ENCODE measurements at regions of chr2 and their contacts with region 1.

Region 1: DNA sequence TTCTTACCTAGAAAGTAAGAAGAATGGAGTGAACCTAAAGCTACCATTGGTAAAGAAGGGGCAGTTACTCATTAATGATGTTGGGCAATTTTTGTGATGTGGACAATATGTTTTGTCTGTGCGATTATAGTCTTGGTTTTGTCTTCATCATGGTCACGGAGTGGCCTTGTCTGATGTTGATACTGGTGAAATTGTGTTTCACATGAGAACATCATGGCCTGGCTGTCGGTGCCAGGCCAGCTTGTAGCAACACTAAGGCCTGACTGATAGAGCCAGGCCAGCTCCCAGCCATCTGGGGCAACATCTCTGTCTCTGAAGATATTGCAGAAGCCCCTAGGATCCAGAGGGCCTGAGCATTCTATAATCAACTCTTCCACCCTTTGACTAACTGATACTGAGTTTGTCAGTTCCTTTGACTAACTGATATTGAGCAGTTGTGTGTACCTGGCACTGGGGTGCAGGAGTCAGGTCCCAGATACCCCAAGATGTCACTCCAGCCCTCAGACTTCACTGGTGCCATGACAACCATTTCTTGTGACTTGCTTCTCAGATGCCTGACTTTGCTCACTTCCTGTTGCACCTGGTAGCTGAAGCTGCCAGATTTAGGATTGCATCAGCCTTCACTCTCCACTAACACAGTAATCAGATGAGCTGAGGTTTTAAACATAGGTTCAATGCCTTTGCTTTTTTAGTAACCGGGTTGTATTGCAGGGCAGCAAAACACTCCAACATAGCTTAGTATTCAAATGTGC is 62.5 kb downstream of the RPIA start:
- DNase-seq: peak; percentile 98
- H3K4me3 ChIP-seq: peak overlapping the region; percentile 37
- H3K27ac ChIP-seq: peak overlapping the region; percentile 96
- H3K4me1 ChIP-seq: peaks cover 81% of the 10 kb centered on the region
- CTCF ChIP-seq: no peak

Region 2: GRCh38 chr2:88606371-88607030 is 147.5 kb before region 1 on chr2:
- CTCF ChIA-PET with region 1: interaction called, 3 read pairs
- POLR2A ChIA-PET with region 1: interaction called, 6 read pairs
- intact Hi-C with region 1: loop called (anchors 5 kb)
- DNase-seq: peak; percentile 92
- H3K4me3 ChIP-seq: peak overlapping the region; percentile 45
- H3K27ac ChIP-seq: peak overlapping the region; percentile 99
- H3K4me1 ChIP-seq: peaks cover 99% of the 10 kb centered on the region
- CTCF ChIP-seq: no peak

Region 3: GRCh38 chr2:88765154-88765900 is 11.3 kb after region 1 on chr2:
- CTCF ChIA-PET with region 1: no interaction called
- POLR2A ChIA-PET with region 1: interaction called, 57 read pairs
- intact Hi-C with region 1: loop called (anchors 1 kb)
- DNase-seq: peak; percentile 94
- H3K4me3 ChIP-seq: peak overlapping the region; percentile 78
- H3K27ac ChIP-seq: peak overlapping the region; percentile 86
- H3K4me1 ChIP-seq: peaks cover 33% of the 10 kb centered on the region
- CTCF ChIP-seq: 0 out of 2 replicates have a peak, but pooled peaks have one; percentile 15

Region 4: GRCh38 chr2:88831792-88832248 is 77.8 kb after region 1 on chr2:
- CTCF ChIA-PET with region 1: interaction called, 9 read pairs
- POLR2A ChIA-PET with region 1: interaction called, 517 read pairs
- intact Hi-C with region 1: no loop called
- DNase-seq: peak; percentile 98
- H3K4me3 ChIP-seq: peak overlapping the region; percentile 66
- H3K27ac ChIP-seq: peak overlapping the region; percentile 100
- H3K4me1 ChIP-seq: peaks cover 99% of the 10 kb centered on the region
- CTCF ChIP-seq: peak; percentile 98

Region 5: GRCh38 chr2:88838165-88838635 is 84.2 kb after region 1 on chr2:
- CTCF ChIA-PET with region 1: interaction called, 5 read pairs
- POLR2A ChIA-PET with region 1: interaction called, 517 read pairs
- intact Hi-C with region 1: loop called (anchors 1 kb)
- DNase-seq: peak; percentile 100
- H3K4me3 ChIP-seq: peak overlapping the region; percentile 66
- H3K27ac ChIP-seq: peak overlapping the region; percentile 100
- H3K4me1 ChIP-seq: peaks cover 99% of the 10 kb centered on the region
- CTCF ChIP-seq: no peak

Region 6: DNA sequence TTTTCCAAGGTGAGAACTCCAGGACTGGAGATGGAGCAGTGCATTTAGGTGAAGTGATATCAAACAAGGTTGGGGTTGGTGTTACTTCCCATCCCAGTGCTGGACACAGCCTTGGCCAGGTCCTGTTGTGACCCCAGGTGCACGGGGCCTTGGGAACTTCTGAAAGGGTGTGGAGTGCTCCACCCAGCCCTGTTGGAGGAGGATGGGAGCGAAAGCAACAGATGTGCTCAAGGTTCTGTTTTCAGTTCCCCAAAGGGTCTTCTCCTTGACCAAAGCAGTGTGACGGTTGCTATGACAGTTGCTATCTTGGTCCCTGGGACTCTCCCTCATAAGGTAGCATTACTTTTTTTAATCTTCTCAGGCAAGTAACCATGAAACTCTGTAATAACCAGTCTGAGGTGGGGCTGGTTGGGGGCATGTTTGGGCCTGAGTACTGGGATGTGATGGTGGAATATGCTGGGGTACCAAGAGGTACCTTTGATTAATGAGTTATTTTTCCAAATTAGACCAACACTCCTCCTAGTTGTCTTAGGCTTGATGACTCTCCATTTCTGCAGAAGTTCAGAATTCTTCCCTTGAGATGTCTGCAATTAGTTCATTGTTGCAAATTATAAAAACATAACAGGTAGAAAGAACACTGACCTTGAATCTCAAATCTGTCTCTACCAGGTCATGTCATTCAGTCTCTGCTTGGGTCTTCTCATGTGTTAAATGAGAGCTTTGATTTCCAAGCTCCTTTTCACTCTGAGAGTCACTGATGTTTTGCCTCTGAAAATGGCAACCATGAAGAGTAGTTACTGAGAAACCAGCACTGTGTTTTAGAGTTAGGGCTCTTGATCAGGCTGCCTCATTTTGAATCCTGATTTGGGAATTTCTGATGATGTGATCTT is 92.0 kb after region 1 on chr2:
- CTCF ChIA-PET with region 1: interaction called, 8 read pairs
- POLR2A ChIA-PET with region 1: interaction called, 517 read pairs
- intact Hi-C with region 1: no loop called
- DNase-seq: peak; percentile 99
- H3K4me3 ChIP-seq: peak overlapping the region; percentile 38
- H3K27ac ChIP-seq: peak overlapping the region; percentile 100
- H3K4me1 ChIP-seq: peaks cover 99% of the 10 kb centered on the region
- CTCF ChIP-seq: no peak